Activated naive CD4-positive, alpha-beta T cell treated with anti-CD3 and anti-CD28 coated beads, Interleukin-2, amount 10 ng/mL, durations not matched to agents 7 days and 5 days (primary cell): ENCODE measurements at regions of chr16 and their contacts with region 1.

Region 1: DNA sequence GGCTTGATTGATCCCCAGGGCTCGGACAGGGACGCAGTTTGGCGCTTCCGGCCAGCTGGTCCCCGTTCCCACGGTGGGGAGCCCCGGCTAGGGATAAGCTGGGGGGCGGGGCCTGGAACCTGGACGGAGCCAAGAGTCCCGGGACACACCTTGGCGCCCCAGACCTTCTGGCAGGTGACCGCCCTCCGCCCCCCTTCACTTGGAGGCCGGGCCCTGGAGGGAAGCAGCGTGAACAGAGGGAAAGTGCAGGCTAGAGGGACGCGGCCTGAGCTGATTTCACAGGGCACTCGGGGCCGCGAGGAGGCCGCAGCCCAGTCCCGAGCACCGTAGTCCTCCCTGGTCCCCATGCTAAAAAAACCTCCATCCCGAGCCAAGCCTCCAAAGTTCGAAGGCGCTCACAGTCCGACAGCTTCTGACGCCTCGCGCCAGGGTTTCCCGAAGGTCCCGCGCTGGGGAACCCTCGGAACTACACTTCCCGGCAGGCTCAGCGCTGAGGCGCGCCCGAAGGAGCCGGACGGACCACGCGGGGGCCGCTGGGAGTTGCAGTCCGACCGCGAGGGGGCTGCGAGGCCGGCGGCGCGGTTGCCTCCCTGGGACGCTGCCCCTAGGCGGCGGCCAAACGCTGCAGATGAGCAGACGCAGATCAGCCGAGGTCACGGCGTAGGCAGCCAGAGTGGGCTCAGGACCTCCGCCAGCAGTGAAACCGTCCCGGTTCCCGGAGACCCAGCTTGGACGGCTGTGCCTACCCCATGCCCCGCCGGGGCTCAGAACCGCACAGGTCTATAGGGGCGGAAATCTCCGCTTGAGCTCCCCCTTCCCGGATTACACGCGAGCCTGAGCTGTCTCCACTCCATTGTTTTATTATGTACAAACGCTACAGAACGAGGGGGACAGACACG is at the start of gene TBX6:
- DNase-seq: peak; percentile 95
- H3K4me3 Mint-ChIP-seq: peak within 1 kb of the TSS; percentile 80
- H3K27ac Mint-ChIP-seq: peak within 1 kb of the TSS; percentile 94
- H3K4me1 Mint-ChIP-seq: peaks cover 66% of the 10 kb centered on the region
- H3K27me3 Mint-ChIP-seq: no peaks in the 10 kb centered on the region

Region 2: DNA sequence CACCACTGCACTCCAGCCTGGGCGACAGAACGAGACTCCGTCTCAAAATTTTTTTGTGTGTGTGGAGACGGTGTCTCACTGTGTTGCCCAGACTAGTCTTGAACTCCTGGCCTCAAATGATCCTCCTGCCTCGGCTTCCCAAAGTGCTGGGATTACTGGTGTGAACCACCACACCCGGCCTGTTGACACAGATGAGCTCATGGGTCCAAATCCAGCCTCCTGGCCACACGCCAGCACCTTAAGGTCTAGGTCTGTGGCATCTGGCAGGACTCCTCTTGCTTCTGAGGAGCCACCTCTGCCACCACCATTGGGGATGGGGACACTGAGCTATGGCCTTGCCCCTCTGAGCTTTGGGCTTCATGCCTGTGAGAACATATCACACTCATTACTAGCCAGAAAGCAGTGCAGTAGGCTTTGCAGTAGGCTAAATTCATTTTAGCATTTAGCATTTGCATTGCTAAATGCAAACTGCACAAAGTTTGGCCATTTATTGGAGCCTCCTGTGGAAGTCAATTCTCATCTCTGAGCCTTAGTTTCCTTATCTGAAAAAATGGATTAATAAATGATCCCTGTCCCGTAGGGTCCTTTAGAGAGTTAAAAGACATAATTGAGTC is 223.2 kb before region 1 on chr16:
- CTCF ChIA-PET with region 1: no interaction called
- DNase-seq: no peak
- H3K4me3 Mint-ChIP-seq: no peak overlapping the region
- H3K27ac Mint-ChIP-seq: no peak overlapping the region
- H3K4me1 Mint-ChIP-seq: peaks cover 11% of the 10 kb centered on the region
- H3K27me3 Mint-ChIP-seq: peaks cover 23% of the 10 kb centered on the region

Region 3: DNA sequence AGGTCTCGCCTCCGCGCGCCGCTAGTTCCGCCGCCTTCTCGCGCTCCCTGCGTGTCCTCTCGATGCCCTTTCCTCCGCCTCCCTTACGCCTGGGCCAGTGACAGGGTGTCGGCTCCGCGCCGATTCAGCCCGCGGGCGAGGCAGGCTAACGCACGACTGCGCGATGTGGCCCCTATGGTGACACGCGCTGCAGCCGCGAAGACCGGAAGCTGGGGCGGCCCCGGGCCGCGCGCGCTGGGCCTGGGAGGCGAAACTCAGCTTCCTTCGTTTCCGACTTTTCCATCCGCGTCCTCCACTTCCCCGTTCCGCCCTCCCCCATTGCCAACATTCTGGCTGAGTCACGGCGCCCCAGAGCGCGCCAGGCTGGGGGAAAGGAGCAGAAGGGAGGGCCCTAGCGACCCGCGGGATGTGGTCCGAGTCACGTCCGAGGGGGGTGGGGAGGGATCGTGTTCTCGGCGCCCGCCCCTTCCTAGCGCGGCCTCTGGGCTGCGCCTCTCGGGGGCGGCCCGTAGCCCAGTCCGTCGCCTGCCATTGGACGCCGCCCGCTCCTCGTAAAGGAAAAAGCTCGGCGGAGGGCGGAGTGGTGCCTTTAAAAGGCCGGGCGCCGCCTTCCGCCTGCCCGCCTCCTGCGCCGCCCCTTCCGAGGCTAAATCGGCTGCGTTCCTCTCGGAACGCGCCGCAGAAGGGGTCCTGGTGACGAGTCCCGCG is 26.4 kb before region 1 on chr16 and contains the start of gene ALDOA:
- CTCF ChIA-PET with region 1: interaction called, 41 read pairs
- DNase-seq: peak; percentile 97
- H3K4me3 Mint-ChIP-seq: peak within 1 kb of the TSS; percentile 100
- H3K27ac Mint-ChIP-seq: peak within 1 kb of the TSS; percentile 98
- H3K4me1 Mint-ChIP-seq: peaks cover 45% of the 10 kb centered on the region
- H3K27me3 Mint-ChIP-seq: peaks cover 4% of the 10 kb centered on the region

Region 4: DNA sequence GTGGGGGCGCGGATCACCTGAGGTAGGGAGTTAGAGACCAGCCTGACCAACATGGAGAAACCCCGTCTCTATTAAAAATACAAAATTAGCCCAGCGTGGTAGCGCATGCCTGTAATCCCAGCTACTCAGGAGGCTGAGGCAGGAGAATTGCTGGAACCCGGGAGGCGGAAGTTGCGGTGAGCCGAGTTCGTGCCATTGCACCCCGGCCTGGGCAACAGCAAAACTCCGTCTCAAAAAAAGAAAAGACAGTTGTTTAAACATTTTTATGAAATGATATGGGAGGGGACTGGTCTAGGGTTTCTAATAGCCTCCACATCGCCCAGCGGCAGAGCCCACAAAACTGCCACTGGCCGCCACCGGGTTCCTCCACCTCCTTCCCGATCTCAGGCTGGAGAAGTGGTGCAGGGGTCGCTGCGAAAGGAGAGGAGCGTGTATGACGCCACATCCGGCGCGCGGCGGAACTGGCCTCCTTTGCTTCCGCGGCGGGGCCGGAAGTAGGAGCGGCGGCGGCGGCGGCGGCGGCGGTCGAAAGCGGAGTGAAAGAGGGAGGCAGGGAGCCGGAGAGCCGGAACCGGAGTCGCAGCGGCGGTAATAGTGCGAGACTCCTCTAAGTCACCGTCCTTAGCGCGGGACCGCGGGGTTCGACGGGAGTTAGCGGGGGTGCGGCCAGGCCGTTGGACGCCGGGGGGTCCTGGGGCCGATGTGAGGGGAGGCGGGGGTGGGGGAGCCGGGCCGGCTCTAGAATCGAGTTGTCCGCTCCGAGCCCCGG is 16.0 kb before region 1 on chr16 and contains the start of gene PPP4C:
- CTCF ChIA-PET with region 1: interaction called, 54 read pairs
- DNase-seq: peak; percentile 95
- H3K4me3 Mint-ChIP-seq: peak within 1 kb of the TSS; percentile 86
- H3K27ac Mint-ChIP-seq: peak within 1 kb of the TSS; percentile 93
- H3K4me1 Mint-ChIP-seq: peaks cover 50% of the 10 kb centered on the region
- H3K27me3 Mint-ChIP-seq: no peaks in the 10 kb centered on the region

Region 5: DNA sequence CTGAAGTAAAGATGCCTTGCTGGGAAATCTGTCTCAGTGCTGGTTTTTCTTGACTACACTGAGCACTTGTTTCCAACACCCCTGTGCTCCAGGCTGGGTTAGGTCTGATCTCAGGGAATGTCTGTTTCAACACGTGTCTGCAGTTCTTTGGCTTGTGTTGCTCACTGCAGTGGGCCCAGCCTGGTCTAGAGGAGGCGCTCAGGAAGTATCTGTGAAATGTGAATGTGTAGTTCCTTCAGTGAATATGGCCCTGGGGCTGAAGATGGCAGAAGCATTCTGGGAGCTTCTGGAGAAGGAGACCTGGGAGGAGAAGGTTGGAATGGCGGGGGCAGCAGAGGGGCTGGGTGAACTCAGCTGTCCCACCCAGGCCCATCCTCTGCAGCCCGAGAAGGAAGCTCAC is 12.4 kb after region 1 on chr16:
- CTCF ChIA-PET with region 1: interaction called, 14 read pairs
- DNase-seq: no peak
- H3K4me3 Mint-ChIP-seq: no peak overlapping the region
- H3K27ac Mint-ChIP-seq: no peak overlapping the region
- H3K4me1 Mint-ChIP-seq: no peaks in the 10 kb centered on the region
- H3K27me3 Mint-ChIP-seq: no peaks in the 10 kb centered on the region

Region 6: DNA sequence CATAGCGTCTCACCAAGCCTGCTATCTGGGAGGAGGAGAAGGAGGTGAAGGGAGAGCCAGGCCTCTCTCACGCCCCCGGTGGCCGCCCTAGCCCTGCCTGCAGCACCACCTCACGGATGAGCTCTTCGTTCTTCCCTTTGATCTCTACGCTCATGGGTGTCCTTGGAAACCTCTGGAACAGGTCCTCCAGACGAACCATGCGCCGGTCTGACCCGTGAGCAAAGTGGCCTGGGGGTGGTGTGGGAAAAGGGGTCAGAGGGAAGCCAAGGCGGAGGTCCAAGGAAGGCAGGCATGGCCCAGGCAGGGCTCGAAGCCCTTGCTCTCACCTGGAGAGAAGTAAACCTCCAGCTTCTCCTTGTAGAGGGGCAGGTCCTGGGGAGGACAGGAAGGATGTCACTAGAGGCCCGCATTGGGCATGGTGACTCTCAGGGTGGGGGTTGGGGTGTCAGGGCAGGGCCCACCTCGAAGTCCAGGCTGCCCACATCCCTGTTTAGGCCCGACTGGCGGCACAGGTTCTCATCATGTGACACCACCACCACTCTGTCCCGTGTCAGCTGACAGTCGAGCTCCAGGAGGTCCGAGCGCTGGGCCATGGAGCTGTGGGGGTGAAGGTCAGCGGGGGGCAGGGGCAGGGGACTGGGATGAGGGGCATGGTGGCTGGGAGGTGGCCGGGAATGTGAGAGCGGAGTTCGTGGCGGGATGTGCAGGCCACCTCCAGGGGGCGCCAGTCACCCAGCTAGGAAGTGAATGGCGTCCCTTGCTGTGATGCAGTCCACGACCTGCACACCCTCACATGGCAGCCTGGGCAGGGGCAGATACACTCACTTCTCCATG is 20.7 kb after region 1 on chr16:
- CTCF ChIA-PET with region 1: interaction called, 12 read pairs
- DNase-seq: peak; percentile 72
- H3K4me3 Mint-ChIP-seq: no peak overlapping the region
- H3K27ac Mint-ChIP-seq: peak overlapping the region; percentile 39
- H3K4me1 Mint-ChIP-seq: peaks cover 20% of the 10 kb centered on the region
- H3K27me3 Mint-ChIP-seq: no peaks in the 10 kb centered on the region

Region 7: GRCh38 chr16:30186782-30187555 is 95.2 kb after region 1 on chr16:
- CTCF ChIA-PET with region 1: interaction called, 13 read pairs
- DNase-seq: peak; percentile 88
- H3K4me3 Mint-ChIP-seq: peak overlapping the region; percentile 100
- H3K27ac Mint-ChIP-seq: peak overlapping the region; percentile 98
- H3K4me1 Mint-ChIP-seq: peaks cover 27% of the 10 kb centered on the region
- H3K27me3 Mint-ChIP-seq: peaks cover 5% of the 10 kb centered on the region

Region 8: DNA sequence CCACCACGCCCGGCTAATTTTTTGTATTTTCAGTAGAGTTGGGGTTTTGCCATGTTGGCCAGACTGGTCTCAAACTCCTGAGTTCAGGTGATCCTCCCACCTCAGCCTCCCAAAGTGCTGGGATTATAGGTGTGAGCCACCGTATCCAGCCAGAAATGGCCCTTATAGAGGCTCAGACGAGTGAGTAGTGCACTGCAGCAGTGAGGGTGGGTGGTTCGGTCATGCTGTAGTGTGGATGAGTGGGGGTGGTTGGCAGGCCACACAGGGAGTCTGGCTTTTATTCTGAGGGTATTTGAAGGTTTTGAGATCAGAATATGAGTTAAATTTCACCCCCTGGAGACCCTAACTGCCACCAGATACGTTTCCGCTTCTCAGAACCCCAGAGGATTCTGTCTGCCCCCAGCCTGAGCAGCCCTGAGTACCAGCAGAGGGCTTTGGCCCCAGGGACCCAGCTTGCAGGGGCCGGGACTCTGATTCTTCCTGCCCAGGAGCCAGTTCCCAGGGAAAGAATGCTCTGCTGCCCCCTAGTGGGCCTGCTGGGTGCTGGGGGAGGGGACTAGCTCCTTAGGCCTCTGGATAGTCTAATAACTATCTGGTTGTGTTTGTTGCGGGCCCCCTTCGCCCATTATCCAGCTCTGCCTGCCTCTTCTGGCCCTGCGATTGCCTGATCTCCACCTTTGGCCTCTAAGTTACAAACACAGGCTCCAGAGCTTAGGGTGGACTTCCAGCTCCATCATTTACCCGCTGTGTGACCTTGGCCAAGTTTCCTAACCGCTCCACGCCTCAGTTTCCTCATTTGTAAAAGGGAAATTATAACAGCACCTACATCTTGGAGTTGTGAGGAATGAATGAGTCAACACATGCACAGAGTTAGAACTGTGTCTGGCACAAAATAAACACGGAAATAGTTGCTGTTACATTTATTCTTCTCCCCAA is 317.7 kb after region 1 on chr16:
- CTCF ChIA-PET with region 1: interaction called, 19 read pairs
- DNase-seq: peak; percentile 95
- H3K4me3 Mint-ChIP-seq: no peak overlapping the region
- H3K27ac Mint-ChIP-seq: no peak overlapping the region
- H3K4me1 Mint-ChIP-seq: peaks cover 31% of the 10 kb centered on the region
- H3K27me3 Mint-ChIP-seq: peaks cover 5% of the 10 kb centered on the region